Activated T-helper 2 cell treated with anti-CD3 and anti-CD28 coated beads, Interferon-gamma antibody, Interleukin-2, Interleukin-4, amounts not matched to agents 10 μg/mL and 5 μg/mL and 100 μg/mL, durations not matched to agents 14 hours and 24 hours and 36 hours (primary cell): ENCODE measurements at regions of chr17 and their contacts with region 1.

Region 1: DNA sequence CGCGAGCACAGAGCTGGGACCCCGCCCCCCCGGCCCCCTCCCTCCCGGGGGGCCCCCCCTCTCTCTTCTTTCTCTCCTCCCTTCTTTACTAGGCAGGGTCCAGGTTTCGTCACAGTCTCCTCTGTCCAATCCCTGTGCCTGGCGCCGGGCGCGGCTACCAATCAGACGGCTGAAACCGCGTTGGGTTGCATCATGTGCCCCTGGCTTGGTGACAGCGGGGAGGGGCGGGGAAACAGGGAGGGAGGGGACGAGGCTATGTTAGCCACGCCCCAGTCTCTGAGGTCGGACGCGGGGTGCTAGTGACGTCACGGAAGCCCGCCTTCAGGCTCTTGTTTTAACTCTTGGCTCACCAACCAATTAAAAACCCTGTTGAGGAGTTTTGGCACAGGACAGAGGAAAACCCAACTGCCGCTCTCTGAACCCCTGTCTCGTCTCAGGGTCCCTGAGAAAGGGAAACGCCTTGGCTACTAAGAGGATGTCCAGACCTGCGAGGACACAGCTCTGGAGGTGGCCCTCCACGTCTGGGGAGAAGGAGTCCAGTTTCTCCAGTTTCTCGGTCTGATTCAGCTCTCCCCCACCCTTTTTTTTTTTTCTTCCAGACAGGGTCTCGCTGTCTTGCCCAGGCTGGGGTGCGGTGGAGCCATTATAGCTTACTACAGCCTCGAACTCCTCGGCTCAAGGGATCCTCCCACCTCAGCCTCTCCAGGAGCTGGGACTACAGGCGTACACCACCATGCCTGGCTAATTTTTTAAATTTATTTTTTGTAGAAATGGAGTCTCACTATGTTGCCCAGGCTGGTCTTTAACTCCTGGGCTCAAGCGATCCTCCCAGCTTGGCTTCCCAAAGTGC is 439 bp upstream of the PLEKHH3 start:
- DNase-seq: peak; percentile 96
- H3K4me3 Mint-ChIP-seq: peak overlapping the region; percentile 87
- H3K27ac Mint-ChIP-seq: peak overlapping the region; percentile 76
- H3K4me1 Mint-ChIP-seq: peaks cover 41% of the 10 kb centered on the region
- H3K27me3 Mint-ChIP-seq: peaks cover 42% of the 10 kb centered on the region

Region 2: GRCh38 chr17:42087736-42088705 is 589.2 kb before region 1 on chr17:
- intact Hi-C with region 1: no loop called
- DNase-seq: no peak
- H3K4me3 Mint-ChIP-seq: no peak overlapping the region
- H3K27ac Mint-ChIP-seq: no peak overlapping the region
- H3K4me1 Mint-ChIP-seq: no peaks in the 10 kb centered on the region
- H3K27me3 Mint-ChIP-seq: peaks cover 16% of the 10 kb centered on the region

Region 3: DNA sequence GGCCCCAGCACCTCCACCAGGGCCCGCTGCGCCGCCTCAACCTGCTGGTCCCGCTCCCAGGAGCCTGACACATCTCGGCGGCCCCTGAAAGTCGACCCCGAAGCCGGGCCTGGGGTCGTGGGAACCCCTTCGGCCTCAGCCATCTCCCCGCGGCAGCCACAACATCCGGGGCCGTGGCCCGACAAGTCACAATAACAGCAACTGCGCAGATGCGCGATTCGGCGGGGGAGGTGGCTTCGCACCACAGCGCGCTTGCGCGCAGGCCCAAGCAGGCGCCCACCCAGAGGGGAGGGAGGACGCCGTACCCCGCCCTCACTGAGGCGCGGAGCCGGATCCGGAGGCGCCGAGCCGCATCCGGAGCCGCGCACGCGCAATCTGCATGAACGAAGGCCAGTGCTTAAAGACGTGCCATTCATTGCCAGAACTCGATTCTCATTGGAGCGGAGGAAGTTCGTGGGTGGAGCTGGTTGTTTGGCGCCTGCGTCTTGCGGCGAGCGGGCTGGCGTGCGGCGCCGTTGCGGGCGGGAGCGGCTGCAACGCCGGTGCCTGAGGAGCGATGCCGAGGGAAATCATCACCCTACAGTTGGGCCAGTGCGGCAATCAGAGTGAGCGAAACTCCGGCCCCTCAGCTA is 67.9 kb before region 1 on chr17 and contains the starts of genes RETREG3 and TUBG1:
- intact Hi-C with region 1: loop called (anchors 1 kb)
- DNase-seq: peak; percentile 100
- H3K4me3 Mint-ChIP-seq: peak within 1 kb of the TSS; percentile 98
- H3K27ac Mint-ChIP-seq: peak within 1 kb of the TSS; percentile 92
- H3K4me1 Mint-ChIP-seq: peaks cover 19% of the 10 kb centered on the region
- H3K27me3 Mint-ChIP-seq: no peaks in the 10 kb centered on the region
- total RNA-seq, gene RETREG3: 37.7 and 39.0 TPM in 2 replicates
- total RNA-seq, gene TUBG1: 85.5 and 94.9 TPM in 2 replicates

Region 4: GRCh38 chr17:42659079-42659931 is 17.9 kb before region 1 on chr17 and contains the start of gene TUBG2:
- intact Hi-C with region 1: loop called (anchors 2 kb)
- DNase-seq: peak; percentile 66
- H3K4me3 Mint-ChIP-seq: peak within 1 kb of the TSS; percentile 86
- H3K27ac Mint-ChIP-seq: peak within 1 kb of the TSS; percentile 42
- H3K4me1 Mint-ChIP-seq: peaks cover 14% of the 10 kb centered on the region
- H3K27me3 Mint-ChIP-seq: peaks cover 22% of the 10 kb centered on the region
- total RNA-seq, gene TUBG2: 12.2 and 12.6 TPM in 2 replicates

Region 5: DNA sequence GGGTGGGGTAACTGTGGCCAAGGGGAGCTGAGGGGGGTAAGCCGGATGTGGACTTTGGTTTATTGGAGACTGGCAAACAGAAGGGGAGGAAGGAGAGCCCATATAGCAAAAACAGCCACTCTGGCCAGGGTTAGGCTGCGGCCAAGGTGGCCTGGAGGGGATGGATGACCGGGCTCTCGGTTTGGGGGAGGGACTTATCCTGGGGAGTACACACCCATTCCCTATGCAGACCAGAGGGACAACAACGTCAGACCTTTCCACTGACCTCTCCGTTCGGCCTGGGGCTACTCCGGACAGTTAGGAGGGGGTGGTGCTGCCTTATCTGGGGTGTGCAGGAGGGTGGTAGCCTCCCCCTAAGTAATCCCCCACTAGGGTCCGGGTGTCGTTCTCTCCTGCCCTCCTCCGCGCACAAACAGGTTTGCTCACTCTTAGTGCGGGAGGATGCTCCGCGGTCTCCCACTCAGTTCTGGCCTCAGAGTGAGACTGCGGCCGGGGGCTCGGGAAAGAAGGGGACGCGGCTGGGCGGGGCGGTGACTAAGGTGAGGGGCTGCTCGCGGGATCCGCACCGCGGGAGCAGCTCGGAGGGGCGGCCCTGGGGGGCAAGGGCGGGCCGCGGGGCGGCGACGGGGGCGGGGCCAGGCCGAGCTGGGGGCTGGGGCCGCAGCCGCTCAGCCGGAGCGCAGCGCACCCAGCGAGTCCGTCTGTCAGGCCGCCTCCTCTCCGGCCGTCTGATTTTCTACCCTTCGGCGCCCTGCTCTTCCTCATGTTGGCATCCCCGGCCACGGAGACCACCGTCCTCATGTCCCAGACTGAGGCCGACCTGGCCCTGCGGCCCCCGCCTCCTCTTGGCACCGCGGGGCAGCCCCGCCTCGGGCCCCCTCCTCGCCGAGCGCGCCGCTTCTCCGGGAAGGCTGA is 103.0 kb after region 1 on chr17 and contains the start of gene WNK4:
- intact Hi-C with region 1: loop called (anchors 5 kb)
- DNase-seq: no peak
- H3K4me3 Mint-ChIP-seq: no peak within 1 kb of the TSS
- H3K27ac Mint-ChIP-seq: no peak within 1 kb of the TSS
- H3K4me1 Mint-ChIP-seq: peaks cover 11% of the 10 kb centered on the region
- H3K27me3 Mint-ChIP-seq: peaks cover 43% of the 10 kb centered on the region
- total RNA-seq, gene WNK4: 0.16 and 0.28 TPM in 2 replicates